Body of pancreas (tissue), 4 donors: ENCODE measurements at regions of chr5 and their contacts with region 1.

Region 1: DNA sequence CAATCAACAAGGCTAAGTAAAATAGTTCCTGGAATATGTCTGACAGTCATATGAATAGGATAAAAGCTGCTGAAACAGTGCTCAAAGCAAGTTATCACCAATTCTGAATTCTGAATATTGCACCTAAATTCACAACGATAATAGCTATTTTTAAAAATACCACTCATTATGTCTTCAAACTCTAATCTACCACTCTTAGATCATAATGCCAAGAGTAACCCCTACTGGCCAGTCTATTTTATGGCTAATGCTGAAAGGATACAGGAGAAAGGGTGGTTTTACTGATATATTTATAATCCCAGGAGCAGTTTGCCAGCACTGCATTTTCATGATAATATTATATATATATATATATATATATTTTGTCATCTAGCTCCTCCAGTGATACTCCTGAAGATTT is 232.8 kb downstream of the PDE4D start:
- DNase-seq: no peak
- ATAC-seq: no peak
- H3K4me3 ChIP-seq: no peak overlapping the region
- H3K27ac ChIP-seq: no peak overlapping the region
- H3K4me1 ChIP-seq: no peaks in the 10 kb centered on the region
- H3K27me3 ChIP-seq: no peaks in the 10 kb centered on the region
- CTCF ChIP-seq: peak in 5 of 7 experiments; percentile 19 to 41 (median 34)
- POLR2A ChIP-seq: no peak

Region 2: GRCh38 chr5:59401637-59402036 is 259.1 kb before region 1 on chr5:
- intact Hi-C with region 1: loop called (anchors 10 kb)
- DNase-seq: no peak
- ATAC-seq: no peak
- H3K4me3 ChIP-seq: no peak overlapping the region
- H3K27ac ChIP-seq: no peak overlapping the region
- H3K4me1 ChIP-seq: no peaks in the 10 kb centered on the region
- H3K27me3 ChIP-seq: no peaks in the 10 kb centered on the region
- CTCF ChIP-seq: no peak
- POLR2A ChIP-seq: no peak

Region 3: GRCh38 chr5:60161340-60161934 is 500.7 kb after region 1 on chr5:
- intact Hi-C with region 1: no loop called
- DNase-seq: no peak
- ATAC-seq: no peak
- H3K4me3 ChIP-seq: no peak overlapping the region
- H3K27ac ChIP-seq: no peak overlapping the region
- H3K4me1 ChIP-seq: no peaks in the 10 kb centered on the region
- H3K27me3 ChIP-seq: no peaks in the 10 kb centered on the region
- CTCF ChIP-seq: peak in 6 of 7 experiments; percentile 21 to 45 (median 29)
- POLR2A ChIP-seq: no peak